Dendritic cell treated with granulocyte-macrophage colony-stimulating factor and Interleukin-4, amounts not matched to agents 40 ng/mL and 50 ng/mL, for 4 days (primary cell): ENCODE measurements at regions of chr15 and their contacts with region 1.

Region 1: DNA sequence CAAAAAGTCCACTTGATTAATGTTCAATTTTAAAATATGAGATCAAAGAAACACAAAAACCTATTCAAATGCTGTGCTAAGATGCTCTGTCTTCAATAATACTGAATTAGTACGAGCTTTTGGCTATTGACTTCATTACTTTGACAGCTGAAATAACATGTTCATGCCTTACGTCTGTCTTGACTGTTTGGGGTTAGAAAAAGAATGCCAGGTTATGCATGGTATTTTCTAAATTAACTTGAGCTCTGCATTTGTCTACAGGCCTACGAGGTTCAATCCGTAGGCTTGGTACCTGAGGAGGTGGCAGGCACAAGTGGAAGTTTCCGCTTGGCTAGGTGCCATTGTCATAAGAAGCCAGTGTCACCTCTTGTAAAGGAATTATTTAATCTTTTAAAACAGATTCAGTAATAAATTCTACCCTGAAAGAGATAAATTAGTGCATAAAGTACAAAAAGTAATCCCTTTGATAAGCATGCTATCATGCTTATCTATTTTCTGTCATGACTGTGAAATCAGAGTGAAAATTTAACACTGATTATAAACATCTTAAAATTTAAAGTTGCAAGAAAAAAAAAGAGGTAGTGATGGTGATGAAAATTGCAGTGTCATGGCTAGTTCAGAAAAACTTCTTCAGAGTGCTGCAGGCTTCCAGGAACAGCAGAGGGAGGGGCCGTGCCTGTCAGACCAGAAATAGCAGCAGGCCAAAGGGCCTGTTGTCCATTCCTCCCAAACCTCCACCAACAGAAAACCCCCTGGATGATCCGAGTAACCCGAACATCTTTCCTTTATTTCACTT is 115.7 kb downstream of the ARRDC4 start:
- H3K4me3 Mint-ChIP-seq: peak overlapping the region; percentile 70
- H3K27ac Mint-ChIP-seq: peak overlapping the region; percentile 99
- H3K4me1 Mint-ChIP-seq: peaks cover 67% of the 10 kb centered on the region
- H3K27me3 Mint-ChIP-seq: no peaks in the 10 kb centered on the region

Region 2: DNA sequence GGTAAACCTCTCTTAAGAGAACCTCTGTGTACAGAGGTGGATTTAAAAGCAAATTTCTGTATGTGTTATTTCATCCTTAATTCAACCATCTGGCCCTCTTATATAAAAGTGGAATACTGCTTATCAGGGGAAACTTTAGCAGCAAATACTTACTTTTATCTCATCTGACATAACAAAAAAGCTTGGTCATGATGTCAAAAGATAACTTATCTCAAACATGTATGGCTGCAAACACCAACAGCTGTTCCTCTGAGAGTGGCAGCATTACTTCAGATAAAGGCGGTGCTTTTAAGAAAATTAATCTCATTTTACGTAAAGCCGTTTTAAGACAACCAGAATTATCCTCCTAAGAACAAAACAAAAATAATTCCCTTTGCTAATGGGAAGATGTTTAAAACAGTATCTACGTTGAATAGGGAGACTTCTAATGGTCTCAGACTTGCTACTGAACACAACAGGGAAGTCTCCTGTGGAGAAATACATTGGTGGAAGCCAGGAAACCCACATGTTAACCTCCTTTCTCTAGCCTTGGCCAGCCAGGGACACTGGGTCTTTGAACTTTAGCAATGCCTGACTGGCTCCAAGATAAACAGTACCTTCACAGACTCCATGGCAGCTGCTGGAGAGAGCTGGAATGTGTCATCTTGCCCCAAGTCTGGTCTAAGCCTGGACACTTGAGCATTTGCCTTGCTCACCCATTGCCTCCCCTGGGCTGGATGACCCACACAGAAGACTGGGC is 97.6 kb before region 1 on chr15:
- intact Hi-C with region 1: loop called (anchors 5 kb)
- H3K4me3 Mint-ChIP-seq: no peak overlapping the region
- H3K27ac Mint-ChIP-seq: no peak overlapping the region
- H3K4me1 Mint-ChIP-seq: peaks cover 14% of the 10 kb centered on the region
- H3K27me3 Mint-ChIP-seq: no peaks in the 10 kb centered on the region

Region 3: GRCh38 chr15:98025235-98025634 is 51.0 kb before region 1 on chr15:
- intact Hi-C with region 1: loop called (anchors 5 kb)
- H3K4me3 Mint-ChIP-seq: no peak overlapping the region
- H3K27ac Mint-ChIP-seq: no peak overlapping the region
- H3K4me1 Mint-ChIP-seq: peaks cover 19% of the 10 kb centered on the region
- H3K27me3 Mint-ChIP-seq: peaks cover 4% of the 10 kb centered on the region

Region 4: DNA sequence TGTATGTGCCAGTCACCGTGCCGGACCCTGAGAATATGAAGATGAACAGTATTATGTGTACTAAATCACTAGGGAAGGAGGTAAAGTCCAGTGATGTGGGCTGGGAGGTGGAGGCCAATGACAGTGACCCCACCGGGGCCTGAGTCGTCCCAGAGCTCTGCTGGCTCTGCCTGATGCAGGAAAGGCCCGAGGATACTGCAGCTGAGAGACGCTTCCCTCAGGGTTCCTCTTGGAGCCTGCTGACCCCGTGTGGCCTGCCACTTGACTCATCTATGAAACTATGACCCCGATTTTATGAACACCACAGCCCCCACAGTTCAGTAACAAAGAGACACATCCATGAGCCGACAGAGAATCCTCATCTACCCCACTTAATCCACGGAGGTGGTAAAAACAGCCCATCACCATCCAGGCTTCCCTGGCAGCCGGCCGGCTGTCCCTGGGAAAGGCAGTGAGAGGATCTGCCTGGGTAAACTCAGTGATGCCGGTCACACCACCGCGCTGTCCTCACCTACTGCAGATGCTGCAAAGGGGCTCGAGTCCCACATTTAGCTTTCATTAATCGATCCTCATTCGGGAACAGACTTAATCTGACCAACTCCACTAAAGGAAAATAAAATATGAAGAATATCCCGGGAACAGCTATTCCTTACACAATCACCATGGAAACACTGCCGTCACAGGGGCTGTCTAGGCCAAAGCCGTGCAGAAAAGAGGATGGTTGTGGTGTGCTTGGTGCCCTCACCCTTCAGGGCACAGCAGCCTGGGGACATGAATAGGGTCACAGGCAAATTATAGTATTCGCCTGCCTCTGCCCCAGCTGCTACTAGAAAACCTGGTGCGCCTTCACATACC is 32.8 kb before region 1 on chr15:
- intact Hi-C with region 1: no loop called
- H3K4me3 Mint-ChIP-seq: no peak overlapping the region
- H3K27ac Mint-ChIP-seq: no peak overlapping the region
- H3K4me1 Mint-ChIP-seq: peaks cover 10% of the 10 kb centered on the region
- H3K27me3 Mint-ChIP-seq: peaks cover 4% of the 10 kb centered on the region